Stomach (tissue), 19 donors: ENCODE measurements at regions of chr1 and their contacts with region 1.

Region 1: DNA sequence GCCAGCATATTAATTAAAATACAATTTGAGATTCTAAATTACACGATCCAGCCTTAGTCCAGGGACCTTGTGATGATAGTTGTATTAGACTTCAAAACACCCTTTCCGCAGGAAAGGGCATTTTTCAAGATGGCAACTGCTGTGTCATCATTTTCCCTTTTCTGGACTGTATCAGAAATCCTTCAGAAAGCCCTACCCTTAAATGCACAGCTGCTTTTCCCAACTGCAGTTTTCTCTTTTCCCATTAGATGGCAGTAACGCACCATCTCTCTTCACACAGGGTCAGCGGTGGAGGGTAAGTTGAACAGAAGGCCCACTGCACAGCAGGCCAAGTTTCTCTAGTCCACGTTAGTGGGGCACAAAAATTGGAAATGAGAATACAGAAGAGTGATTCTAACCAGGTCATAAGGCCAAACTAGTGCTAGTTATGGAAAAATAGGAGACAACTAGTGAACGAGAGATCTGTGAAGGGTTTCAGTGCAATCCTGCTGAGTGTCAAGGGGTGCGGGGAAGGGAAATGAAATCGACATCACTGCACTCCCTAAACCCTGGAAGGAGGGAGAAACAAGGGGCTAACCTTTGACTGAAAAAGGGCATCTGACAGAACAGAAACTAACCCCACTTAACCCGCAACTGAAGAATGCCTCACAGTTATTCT is 22.1 kb upstream of the TDRD10 start:
- DNase-seq: peak; percentile 61 to 92
- H3K4me3 ChIP-seq: no peak overlapping the region
- H3K27ac ChIP-seq: peak overlapping the region in 1 of 5 donors; percentile 25
- H3K4me1 ChIP-seq: peaks cover 0 to 29% (median 9%) of the 10 kb centered on the region in 4 donors
- H3K27me3 ChIP-seq: no peaks in the 10 kb centered on the region
- CTCF ChIP-seq: peak in 6 of 7 experiments; percentile 32 to 97 (median 92)
- EP300 ChIP-seq: no peak
- POLR2A ChIP-seq: no peak

Region 2: GRCh38 chr1:154539507-154540483 is 59.9 kb after region 1 on chr1:
- intact Hi-C with region 1: loop called (anchors 5 kb)
- DNase-seq: no peak
- H3K4me3 ChIP-seq: no peak overlapping the region
- H3K27ac ChIP-seq: no peak overlapping the region
- H3K4me1 ChIP-seq: no peaks in the 10 kb centered on the region
- H3K27me3 ChIP-seq: no peaks in the 10 kb centered on the region
- CTCF ChIP-seq: no peak
- EP300 ChIP-seq: no peak
- POLR2A ChIP-seq: no peak

Region 3: DNA sequence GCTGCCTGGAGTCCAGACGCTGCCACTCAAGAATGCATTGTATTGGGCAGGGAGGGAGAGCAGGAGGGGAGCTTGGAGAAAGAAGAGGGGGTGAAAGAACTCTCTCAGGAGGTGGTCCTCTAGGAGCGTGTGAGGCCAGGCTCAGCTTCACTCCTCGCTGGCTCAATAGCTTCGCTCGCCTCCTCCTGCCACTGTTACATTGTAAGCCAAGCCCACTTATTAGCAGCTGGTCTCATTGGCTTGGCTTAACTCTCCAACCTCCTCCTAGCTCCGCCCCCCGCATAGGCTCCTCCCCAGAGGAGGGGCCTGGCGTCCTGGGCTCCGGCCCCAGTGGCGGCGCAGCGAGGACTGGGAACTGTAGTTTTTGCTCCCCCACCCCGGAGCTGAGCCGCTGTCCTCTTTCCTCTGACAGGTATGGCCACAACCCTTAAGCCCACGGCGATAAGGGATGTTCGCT is 390.2 kb after region 1 on chr1 and contains the start of gene KCNN3:
- intact Hi-C with region 1: loop called (anchors 10 kb)
- DNase-seq: peak; percentile 94 to 98
- H3K4me3 ChIP-seq: peak within 1 kb of the TSS; percentile 35 to 44 (median 38)
- H3K27ac ChIP-seq: peak within 1 kb of the TSS in 2 of 5 donors; percentile 47 to 51
- H3K4me1 ChIP-seq: peaks cover 5 to 51% (median 35%) of the 10 kb centered on the region in 4 donors
- H3K27me3 ChIP-seq: peaks cover 0 to 51% (median 37%) of the 10 kb centered on the region in 3 donors
- CTCF ChIP-seq: no peak
- EP300 ChIP-seq: no peak
- POLR2A ChIP-seq: no peak
- total RNA-seq, gene KCNN3: 1.2 to 10.7 (median 3.5) TPM